Activated CD4-positive, alpha-beta memory T cell treated with anti-CD3 and anti-CD28 coated beads for 36 hours (primary cell): ENCODE measurements at regions of chr2 and their contacts with region 1.

Region 1: DNA sequence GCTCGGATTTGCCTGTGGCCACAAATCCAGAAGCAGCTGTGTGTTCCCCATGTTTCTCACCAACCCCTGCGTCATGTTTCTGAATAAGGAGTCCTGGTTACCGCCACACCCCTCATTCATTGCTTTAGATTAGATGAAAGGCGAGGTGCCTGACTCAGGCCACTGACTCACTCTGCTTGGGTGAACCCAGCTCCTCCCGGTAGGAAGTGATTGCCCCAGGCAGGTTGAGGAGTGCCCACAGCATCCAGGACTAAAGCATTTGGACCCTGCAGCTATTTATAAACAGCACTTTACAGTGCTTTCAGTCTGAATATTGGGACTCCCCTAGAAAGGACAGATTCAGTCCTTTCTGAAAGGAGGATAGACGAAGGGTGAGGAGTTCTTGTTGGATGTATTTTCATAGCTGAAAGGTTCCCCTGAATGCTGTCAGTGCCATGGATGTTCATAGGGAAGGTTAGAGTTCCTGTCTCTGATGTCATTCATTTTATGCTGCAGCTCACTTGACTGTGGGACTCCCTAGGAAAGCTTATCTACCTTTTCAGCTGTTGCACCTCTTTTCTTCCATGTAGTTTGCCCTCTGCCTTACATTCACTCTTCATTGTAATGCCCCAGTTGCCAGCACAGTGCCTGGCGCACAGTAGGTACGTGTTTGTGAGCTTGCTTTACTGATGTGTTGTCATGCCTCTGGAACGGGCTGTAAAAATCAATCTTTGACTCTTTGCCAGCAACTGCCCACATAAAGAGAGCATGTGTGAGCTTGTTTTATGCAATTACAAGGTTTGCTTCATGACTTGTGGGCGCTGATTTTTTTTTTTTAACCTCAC is 14.9 kb downstream of the ITGA6 start:
- DNase-seq: peak; percentile 81
- H3K4me3 Mint-ChIP-seq: peak overlapping the region; percentile 40
- H3K27ac Mint-ChIP-seq: peak overlapping the region; percentile 66
- H3K4me1 Mint-ChIP-seq: peaks cover 63% of the 10 kb centered on the region
- H3K27me3 Mint-ChIP-seq: no peaks in the 10 kb centered on the region

Region 2: DNA sequence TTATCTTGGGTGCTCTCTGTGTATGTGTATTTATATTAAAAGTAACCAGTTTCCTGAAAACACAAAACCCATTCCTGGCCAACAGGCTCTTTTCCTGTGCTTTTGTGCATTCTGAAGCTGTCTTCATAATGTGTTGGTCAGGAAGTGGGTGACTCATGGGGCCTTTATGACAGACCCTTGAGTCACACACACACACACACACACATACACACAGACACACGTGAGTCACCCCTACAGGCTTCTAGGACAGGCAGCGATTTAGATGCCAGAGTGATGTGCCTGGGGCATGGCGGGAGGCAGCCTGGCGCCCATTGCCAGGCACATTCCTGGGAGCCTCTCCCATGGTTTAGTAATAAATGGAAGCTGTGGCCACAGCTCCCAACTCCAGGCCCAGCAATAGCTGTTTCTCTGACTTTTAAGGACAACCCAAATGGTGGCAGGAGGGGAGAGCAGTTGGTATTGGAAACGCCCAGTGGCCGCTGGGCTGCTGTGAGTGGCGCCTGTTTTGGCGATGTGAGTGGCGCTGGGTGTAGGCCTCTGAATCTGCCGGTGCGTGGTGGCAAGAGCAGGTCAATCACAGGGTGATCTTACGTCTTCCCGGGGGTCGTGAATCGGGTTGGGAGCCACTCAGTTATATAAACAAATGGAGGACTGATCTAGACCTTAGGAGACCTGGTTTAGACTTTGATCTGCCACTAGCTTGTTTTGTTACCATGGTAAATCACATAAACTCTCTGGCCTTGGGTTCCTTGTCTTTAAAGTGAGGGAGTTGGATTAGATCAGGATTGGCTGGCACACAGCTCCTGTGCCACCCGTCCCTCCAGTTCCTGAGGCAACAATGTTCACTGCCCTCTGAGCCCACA is 188.9 kb before region 1 on chr2:
- CTCF ChIA-PET with region 1: no interaction called
- POLR2A ChIA-PET with region 1: interaction called, 3 read pairs
- intact Hi-C with region 1: loop called (anchors 5 kb)
- DNase-seq: peak; percentile 71
- H3K4me3 Mint-ChIP-seq: no peak overlapping the region
- H3K27ac Mint-ChIP-seq: no peak overlapping the region
- H3K4me1 Mint-ChIP-seq: peaks cover 27% of the 10 kb centered on the region
- H3K27me3 Mint-ChIP-seq: peaks cover 3% of the 10 kb centered on the region

Region 3: GRCh38 chr2:172427256-172427989 is 14.9 kb before region 1 on chr2 and contains the start of gene ITGA6:
- CTCF ChIA-PET with region 1: interaction called, 13 read pairs
- POLR2A ChIA-PET with region 1: interaction called, 19 read pairs
- intact Hi-C with region 1: loop called (anchors 1 kb)
- DNase-seq: peak; percentile 86
- H3K4me3 Mint-ChIP-seq: peak within 1 kb of the TSS; percentile 80
- H3K27ac Mint-ChIP-seq: peak within 1 kb of the TSS; percentile 56
- H3K4me1 Mint-ChIP-seq: peaks cover 77% of the 10 kb centered on the region
- H3K27me3 Mint-ChIP-seq: no peaks in the 10 kb centered on the region
- total RNA-seq, gene ITGA6: 8.2 to 8.6 TPM